ENCODE measurements at regions of chr2 and their contacts with region 1.

Region 1: DNA sequence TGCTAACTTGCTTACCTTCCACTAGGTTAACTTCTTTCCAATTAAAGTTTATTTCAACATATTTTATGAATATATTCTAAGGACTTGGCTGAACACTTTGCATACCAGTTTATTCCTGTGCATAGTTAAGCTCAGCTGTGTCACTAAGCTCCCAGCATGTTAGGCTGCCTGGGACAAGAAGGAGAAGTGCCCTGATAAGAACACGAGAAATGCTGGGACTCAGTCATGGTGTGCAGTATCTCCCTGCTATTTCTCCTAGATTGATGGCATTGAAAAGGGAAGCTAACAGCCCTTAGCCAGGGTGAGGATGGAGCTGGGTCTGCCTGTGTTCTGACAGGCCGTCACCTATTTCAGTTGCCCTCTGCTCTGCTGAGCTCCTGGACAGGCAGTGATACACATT is 164.3 kb downstream of the TRABD2A start:
- DNase-seq: no peak
- ATAC-seq: no peak
- H3K4me3 Mint-ChIP-seq: peak overlapping the region in 4 of 10 donors; percentile 5 to 48 (median 16)
- H3K27ac Mint-ChIP-seq: peak overlapping the region in 9 of 10 donors; percentile 35 to 95 (median 81)
- H3K4me1 Mint-ChIP-seq: peaks cover 26 to 64% (median 31%) of the 10 kb centered on the region in 4 donors
- H3K27me3 Mint-ChIP-seq: no peaks in the 10 kb centered on the region

Region 2: GRCh38 chr2:83063511-83063910 is 1653.1 kb before region 1 on chr2:
- POLR2A ChIA-PET with region 1: no interaction called
- DNase-seq: no peak
- ATAC-seq: no peak
- H3K4me3 Mint-ChIP-seq: no peak overlapping the region
- H3K27ac Mint-ChIP-seq: no peak overlapping the region
- H3K4me1 Mint-ChIP-seq: no peaks in the 10 kb centered on the region
- H3K27me3 Mint-ChIP-seq: no peaks in the 10 kb centered on the region

Region 3: GRCh38 chr2:84613082-84613481 is 103.5 kb before region 1 on chr2:
- POLR2A ChIA-PET with region 1: no interaction called
- DNase-seq: no peak
- ATAC-seq: no peak
- H3K4me3 Mint-ChIP-seq: no peak overlapping the region
- H3K27ac Mint-ChIP-seq: no peak overlapping the region
- H3K4me1 Mint-ChIP-seq: peaks cover 0 to 2% (median 0%) of the 10 kb centered on the region in 4 donors
- H3K27me3 Mint-ChIP-seq: no peaks in the 10 kb centered on the region

Region 4: GRCh38 chr2:84731185-84731584 is 14.6 kb after region 1 on chr2:
- POLR2A ChIA-PET with region 1: interaction called, 10 read pairs
- DNase-seq: no peak
- ATAC-seq: no peak
- H3K4me3 Mint-ChIP-seq: no peak overlapping the region
- H3K27ac Mint-ChIP-seq: peak overlapping the region in 2 of 10 donors; percentile 13 to 65
- H3K4me1 Mint-ChIP-seq: peaks cover 13 to 45% (median 34%) of the 10 kb centered on the region in 4 donors
- H3K27me3 Mint-ChIP-seq: no peaks in the 10 kb centered on the region